BJ (cell line): ENCODE measurements at regions of chr15 and their contacts with region 1.

Region 1: GRCh38 chr15:74889883-74890664 is at the start of gene MPI:
- DNase-seq: no peak
- H3K4me3 ChIP-seq: peak within 1 kb of the TSS; percentile 99
- H3K27me3 ChIP-seq: no peaks in the 10 kb centered on the region
- CTCF ChIP-seq: no peak
- polyA plus RNA-seq, gene MPI: 73.9 and 105 TPM in 2 replicates

Region 2: GRCh38 chr15:75008629-75009326 is 118.7 kb after region 1 on chr15:
- CTCF ChIA-PET with region 1: no interaction called
- POLR2A ChIA-PET with region 1: interaction called, 11 read pairs
- DNase-seq: no peak
- H3K4me3 ChIP-seq: no peak overlapping the region
- H3K27me3 ChIP-seq: peaks cover 12% of the 10 kb centered on the region
- CTCF ChIP-seq: no peak